WTC11 (cell line): ENCODE measurements at regions of chr11 and their contacts with region 1.

Region 1: DNA sequence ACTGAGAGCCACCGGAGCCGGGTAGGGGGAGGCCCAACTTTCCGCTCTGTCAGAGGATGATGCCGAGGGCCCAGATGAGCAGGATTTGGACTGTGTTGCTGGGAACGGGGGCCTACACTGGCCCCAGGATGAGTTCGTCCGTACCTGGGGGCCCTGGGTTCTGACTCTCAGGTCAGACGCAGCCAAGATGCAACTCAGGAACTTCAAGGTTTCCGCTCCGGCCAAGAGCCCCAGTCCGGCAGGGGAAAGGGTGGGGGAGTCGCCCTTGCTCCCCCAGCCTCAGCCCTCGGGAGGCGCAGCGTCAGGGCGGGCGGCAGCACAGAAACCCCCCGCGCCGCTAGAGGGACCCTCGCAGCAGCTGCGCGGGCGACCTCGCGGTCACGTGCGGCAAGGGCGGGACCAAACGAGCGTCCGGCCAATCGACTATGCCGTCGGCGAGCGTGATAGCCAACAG is 241 bp upstream of the ARL2 start:
- DNase-seq: peak; percentile 95
- ATAC-seq: peak; percentile 82
- H3K4me3 Mint-ChIP-seq: peak overlapping the region; percentile 78
- H3K27ac Mint-ChIP-seq: peak overlapping the region; percentile 92
- H3K4me1 Mint-ChIP-seq: peaks cover 18% of the 10 kb centered on the region
- H3K27me3 Mint-ChIP-seq: no peaks in the 10 kb centered on the region
- CTCF ChIP-seq: 0 out of 2 replicates have a peak, but pooled peaks have one; percentile 47

Region 2: DNA sequence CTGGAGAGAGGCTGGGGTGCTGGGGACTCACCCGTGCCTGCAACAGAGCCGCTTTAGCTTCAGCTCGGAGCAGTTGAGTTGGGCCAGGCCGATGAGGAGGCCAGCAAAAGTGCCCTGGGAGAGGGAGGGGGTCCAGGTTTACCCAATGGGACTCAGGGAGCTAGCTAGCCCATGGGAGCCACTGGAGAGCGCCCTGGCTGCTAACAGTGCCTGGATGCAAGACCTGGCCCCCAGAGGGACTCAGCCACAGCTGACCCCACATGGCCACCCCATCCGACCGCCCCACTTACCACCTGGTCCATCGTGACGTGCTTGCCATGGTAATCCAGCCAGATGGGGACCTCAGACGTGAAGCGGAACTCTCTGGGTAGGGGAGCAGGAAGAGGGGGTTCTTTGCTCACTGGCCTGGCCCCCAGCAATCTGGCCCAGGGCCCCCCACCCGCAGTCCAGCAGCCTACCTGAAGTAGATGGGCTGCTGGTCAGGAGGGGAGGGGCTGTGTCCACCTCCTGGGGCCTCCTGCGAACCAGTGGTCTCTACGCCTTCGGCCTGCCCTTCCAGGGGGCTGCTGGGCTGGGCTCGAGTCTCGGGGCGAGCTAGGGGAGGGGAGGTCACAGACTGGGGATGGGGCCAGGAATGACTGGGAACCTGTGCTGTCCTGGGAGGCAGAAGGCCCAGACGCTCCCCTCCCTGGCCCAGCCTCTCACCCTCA is 116.2 kb before region 1 on chr11:
- CTCF ChIA-PET with region 1: no interaction called
- POLR2A ChIA-PET with region 1: no interaction called
- DNase-seq: no peak
- ATAC-seq: no peak
- H3K4me3 Mint-ChIP-seq: no peak overlapping the region
- H3K27ac Mint-ChIP-seq: no peak overlapping the region
- H3K4me1 Mint-ChIP-seq: 0 out of 2 replicates have a peak, but pooled peaks cover 2% of the 10 kb centered on the region
- H3K27me3 Mint-ChIP-seq: no peaks in the 10 kb centered on the region
- CTCF ChIP-seq: no peak

Region 3: DNA sequence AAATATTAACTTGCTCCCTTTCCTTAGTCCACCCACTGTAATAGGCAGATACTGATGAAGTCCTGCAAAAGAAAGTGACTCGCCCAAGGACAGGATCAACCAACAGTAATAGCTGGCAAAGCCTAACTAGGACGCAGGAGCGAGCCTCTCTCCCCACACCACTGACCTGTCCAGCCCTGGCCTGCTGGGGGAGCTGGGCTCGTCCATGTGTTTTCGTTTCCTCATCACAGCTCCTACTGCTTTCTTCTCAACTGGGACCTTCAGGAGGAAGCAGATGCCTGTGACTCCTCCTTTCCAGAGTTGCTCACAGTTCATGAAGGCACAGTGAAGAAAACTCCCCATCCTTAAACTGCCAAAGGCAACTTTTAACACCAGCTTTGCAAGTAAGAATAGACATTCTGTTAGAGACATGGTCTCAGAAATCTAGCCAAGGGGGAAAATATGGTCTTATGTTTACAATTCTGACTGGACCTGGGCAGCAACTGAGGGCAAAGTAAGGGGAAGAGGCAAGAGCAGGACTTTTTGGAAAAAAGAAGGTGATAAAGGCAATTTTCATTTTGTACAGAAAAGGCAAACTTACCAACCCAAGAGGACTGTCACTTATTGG is 66.4 kb before region 1 on chr11:
- CTCF ChIA-PET with region 1: interaction called, 10 read pairs
- POLR2A ChIA-PET with region 1: no interaction called
- DNase-seq: no peak
- ATAC-seq: no peak
- H3K4me3 Mint-ChIP-seq: no peak overlapping the region
- H3K27ac Mint-ChIP-seq: no peak overlapping the region
- H3K4me1 Mint-ChIP-seq: no peaks in the 10 kb centered on the region
- H3K27me3 Mint-ChIP-seq: peaks cover 9% of the 10 kb centered on the region
- CTCF ChIP-seq: no peak

Region 4: GRCh38 chr11:65003282-65003681 is 10.4 kb before region 1 on chr11:
- CTCF ChIA-PET with region 1: interaction called, 20 read pairs
- POLR2A ChIA-PET with region 1: no interaction called
- DNase-seq: no peak
- ATAC-seq: peak; percentile 56
- H3K4me3 Mint-ChIP-seq: no peak overlapping the region
- H3K27ac Mint-ChIP-seq: no peak overlapping the region
- H3K4me1 Mint-ChIP-seq: peaks cover 3% of the 10 kb centered on the region
- H3K27me3 Mint-ChIP-seq: no peaks in the 10 kb centered on the region
- CTCF ChIP-seq: no peak

Region 5: GRCh38 chr11:65040847-65041621 is 27.3 kb after region 1 on chr11 and contains the start of gene SAC3D1:
- CTCF ChIA-PET with region 1: interaction called, 17 read pairs
- POLR2A ChIA-PET with region 1: no interaction called
- DNase-seq: peak; percentile 92
- ATAC-seq: peak; percentile 90
- H3K4me3 Mint-ChIP-seq: peak within 1 kb of the TSS; percentile 90
- H3K27ac Mint-ChIP-seq: peak within 1 kb of the TSS; percentile 96
- H3K4me1 Mint-ChIP-seq: peaks cover 9% of the 10 kb centered on the region
- H3K27me3 Mint-ChIP-seq: no peaks in the 10 kb centered on the region
- CTCF ChIP-seq: no peak
- total RNA-seq, gene SAC3D1: 22.2 to 26.2 TPM (median 22.8 TPM) in 3 replicates

Region 6: DNA sequence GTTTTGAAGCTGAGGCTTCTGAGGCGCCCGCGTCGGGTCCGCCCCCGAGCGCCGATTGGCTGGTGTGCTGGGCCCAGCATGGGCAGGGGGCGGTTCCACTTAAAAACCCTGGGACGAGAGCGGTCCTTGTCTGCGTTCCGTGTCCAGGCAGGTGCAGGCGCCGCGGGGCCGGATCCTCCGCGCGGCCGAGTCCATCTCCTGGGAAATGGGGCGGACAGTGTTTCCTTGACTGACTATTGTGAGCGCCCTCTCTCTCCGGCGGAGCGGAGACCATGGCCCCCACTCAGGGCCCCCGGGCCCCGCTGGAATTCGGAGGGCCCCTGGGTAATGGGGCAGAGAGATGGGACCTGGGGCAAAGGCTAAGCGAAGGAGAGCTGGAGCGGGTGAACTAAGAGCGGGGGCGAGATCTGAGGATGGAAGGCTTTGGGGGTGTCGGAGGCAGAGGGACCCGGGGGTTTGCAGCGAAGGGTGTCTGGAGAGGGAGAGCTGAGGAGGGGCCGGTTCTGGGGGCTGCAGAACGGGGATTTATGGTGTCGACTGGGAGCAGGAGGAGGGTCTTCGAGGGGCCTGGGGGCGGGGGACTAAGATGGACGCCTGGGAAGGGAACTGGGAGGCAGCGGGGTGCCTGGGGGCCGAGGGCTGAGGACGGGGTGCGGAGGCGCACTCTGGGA is 98.2 kb after region 1 on chr11 and contains the start of gene TM7SF2:
- CTCF ChIA-PET with region 1: interaction called, 37 read pairs
- POLR2A ChIA-PET with region 1: no interaction called
- DNase-seq: peak; percentile 97
- ATAC-seq: peak; percentile 77
- H3K4me3 Mint-ChIP-seq: peak within 1 kb of the TSS; percentile 91
- H3K27ac Mint-ChIP-seq: peak within 1 kb of the TSS; percentile 89
- H3K4me1 Mint-ChIP-seq: peaks cover 17% of the 10 kb centered on the region
- H3K27me3 Mint-ChIP-seq: no peaks in the 10 kb centered on the region
- CTCF ChIP-seq: no peak
- total RNA-seq, gene TM7SF2: 63.8 to 74.9 TPM (median 71.5 TPM) in 3 replicates